Heart right ventricle (tissue), 16 donors: ENCODE measurements at regions of chr10 and their contacts with region 1.

Region 1: DNA sequence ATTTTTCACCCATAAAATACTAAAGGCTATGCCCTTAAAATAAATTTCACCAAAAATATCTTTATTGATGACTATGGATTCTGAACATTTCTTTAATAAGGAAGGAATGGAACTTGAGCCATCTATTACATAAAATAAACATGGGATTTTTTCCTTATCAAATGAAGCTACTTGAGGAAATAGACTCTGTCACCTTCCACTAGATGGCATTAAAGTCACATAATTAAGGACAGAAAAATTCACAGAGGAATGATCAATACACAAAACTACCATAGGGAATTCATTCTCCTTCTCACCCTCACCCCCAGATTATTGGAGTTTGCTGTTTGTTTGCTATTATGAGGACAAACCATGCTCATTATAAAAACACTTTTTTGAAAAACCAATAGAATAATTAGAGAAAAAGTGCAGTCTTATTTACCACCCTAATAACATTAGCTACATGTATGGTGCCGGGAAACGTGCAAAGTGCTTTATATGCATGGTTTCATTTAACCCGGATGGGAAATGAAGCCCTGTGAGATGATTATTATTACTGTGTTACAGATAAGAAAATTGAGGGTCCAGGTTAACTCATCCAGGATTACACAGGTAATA is 21.1 kb upstream of the FOXI2 start:
- DNase-seq: no peak
- ATAC-seq: no peak
- H3K4me3 ChIP-seq: no peak overlapping the region
- H3K27ac ChIP-seq: no peak overlapping the region
- H3K4me1 ChIP-seq: no peaks in the 10 kb centered on the region
- H3K27me3 ChIP-seq: peaks cover 0 to 14% (median 0%) of the 10 kb centered on the region in 7 donors
- CTCF ChIP-seq: peak in 8 of 9 donors; percentile 12 to 73 (median 51)

Region 2: DNA sequence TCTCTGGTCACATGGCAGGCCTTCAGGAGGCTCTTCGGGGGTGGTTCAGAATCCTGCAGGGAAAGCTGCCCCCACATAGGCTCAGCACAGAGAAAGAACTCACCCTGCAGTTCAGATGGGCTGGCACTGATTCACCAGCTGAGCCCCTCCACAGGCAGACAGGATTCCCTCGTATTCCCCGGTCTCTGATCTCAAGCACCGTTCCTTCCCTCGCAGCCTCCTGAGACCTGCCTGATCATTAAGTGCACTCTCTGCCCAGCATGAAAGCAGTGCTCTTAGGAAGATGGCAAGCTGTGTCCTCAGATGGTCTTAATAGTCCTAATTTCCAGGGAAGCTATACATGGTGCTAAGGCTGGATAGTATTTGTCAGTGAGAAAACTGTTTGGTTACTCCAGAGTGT is 245.0 kb before region 1 on chr10:
- intact Hi-C with region 1: no loop called
- DNase-seq: no peak
- ATAC-seq: no peak
- H3K4me3 ChIP-seq: no peak overlapping the region
- H3K27ac ChIP-seq: no peak overlapping the region
- H3K4me1 ChIP-seq: no peaks in the 10 kb centered on the region
- H3K27me3 ChIP-seq: peaks cover 0 to 15% (median 0%) of the 10 kb centered on the region in 7 donors
- CTCF ChIP-seq: no peak

Region 3: DNA sequence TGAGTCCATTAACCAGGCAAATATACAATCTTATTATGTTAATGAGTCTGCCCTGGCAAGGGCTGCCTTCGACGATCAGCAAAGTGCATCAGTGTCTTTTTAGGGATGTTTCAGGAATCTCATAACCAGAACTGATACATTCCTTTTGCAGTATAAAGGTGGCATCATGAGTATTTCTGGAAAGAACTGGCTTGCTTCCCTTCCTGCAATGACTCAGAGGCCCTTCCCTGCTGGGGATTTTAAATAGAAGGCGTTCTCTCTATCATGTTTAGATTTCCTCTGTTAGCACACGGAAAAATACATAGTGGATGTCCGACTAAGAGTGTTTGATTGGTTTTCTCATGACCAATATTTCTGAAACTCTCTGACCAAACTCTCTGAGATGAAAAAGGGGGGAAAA is 165.0 kb before region 1 on chr10:
- intact Hi-C with region 1: no loop called
- DNase-seq: no peak
- ATAC-seq: no peak
- H3K4me3 ChIP-seq: no peak overlapping the region
- H3K27ac ChIP-seq: no peak overlapping the region
- H3K4me1 ChIP-seq: no peaks in the 10 kb centered on the region
- H3K27me3 ChIP-seq: peaks cover 0 to 9% (median 0%) of the 10 kb centered on the region in 7 donors
- CTCF ChIP-seq: no peak

Region 4: DNA sequence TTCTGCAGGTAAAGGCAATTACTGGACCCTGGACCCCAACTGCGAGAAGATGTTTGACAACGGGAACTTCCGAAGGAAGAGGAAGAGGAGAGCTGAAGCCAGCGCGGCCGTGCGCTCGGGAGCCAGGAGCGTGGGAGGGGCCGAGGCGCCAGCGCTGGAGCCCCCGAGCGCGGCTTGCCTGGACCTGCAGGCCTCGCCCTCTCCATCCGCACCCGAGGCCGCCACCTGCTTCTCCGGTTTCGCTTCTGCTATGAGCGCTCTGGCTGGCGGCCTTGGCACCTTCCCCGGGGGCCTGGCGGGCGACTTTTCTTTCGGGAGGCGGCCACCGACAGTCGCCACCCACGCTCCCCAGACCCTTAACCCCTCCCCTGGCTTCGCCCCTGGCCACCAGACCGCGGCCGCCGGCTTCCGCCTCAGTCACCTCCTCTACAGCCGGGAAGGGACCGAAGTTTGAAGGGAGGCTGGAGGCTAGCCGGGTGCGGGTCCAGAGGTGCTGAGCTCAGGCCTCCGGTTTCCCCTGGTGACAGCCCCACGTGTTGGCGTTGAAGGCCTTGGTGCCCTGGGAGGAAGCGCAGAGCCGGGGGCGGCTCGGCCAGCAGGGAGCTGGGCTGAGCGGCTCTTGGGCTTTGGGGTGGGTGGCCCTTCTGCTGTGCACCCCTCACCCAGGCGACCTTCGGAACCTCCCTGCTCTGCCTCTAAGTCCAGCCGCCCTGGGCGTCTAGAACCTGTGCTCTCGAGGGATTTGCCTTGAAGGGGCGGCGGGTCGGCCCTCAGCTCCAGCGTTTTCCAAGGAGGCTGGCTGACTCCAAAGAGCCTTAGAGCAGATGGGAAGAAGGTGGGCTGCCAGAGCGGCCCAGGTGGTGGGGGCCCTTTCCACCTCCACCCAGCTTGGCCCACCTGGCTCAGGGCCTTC is 22.9 kb after region 1 on chr10:
- intact Hi-C with region 1: no loop called
- DNase-seq: no peak
- ATAC-seq: no peak
- H3K4me3 ChIP-seq: peak overlapping the region in 4 of 10 donors; percentile 4 to 56 (median 32)
- H3K27ac ChIP-seq: no peak overlapping the region
- H3K4me1 ChIP-seq: peaks cover 2 to 30% (median 11%) of the 10 kb centered on the region in 9 donors
- H3K27me3 ChIP-seq: peaks cover 22 to 70% (median 57%) of the 10 kb centered on the region in 7 donors
- CTCF ChIP-seq: no peak

Region 5: GRCh38 chr10:127813290-127813689 is 97.4 kb after region 1 on chr10:
- intact Hi-C with region 1: loop called in 1 of 10 experiments (anchors 5 kb)
- DNase-seq: no peak
- ATAC-seq: no peak
- H3K4me3 ChIP-seq: no peak overlapping the region
- H3K27ac ChIP-seq: no peak overlapping the region
- H3K4me1 ChIP-seq: no peaks in the 10 kb centered on the region
- H3K27me3 ChIP-seq: peaks cover 0 to 14% (median 0%) of the 10 kb centered on the region in 7 donors
- CTCF ChIP-seq: peak in 6 of 9 donors; percentile 14 to 54 (median 28)

Region 6: GRCh38 chr10:127853868-127854768 is 138.2 kb after region 1 on chr10:
- intact Hi-C with region 1: loop called (anchors 1 to 5 kb)
- DNase-seq: peak; percentile 48 to 69
- ATAC-seq: peak; percentile 78 to 94 (median 90)
- H3K4me3 ChIP-seq: no peak overlapping the region
- H3K27ac ChIP-seq: no peak overlapping the region
- H3K4me1 ChIP-seq: peaks cover 0 to 8% (median 4%) of the 10 kb centered on the region in 9 donors
- H3K27me3 ChIP-seq: peaks cover 0 to 24% (median 8%) of the 10 kb centered on the region in 7 donors
- CTCF ChIP-seq: peak; percentile 78 to 90 (median 81)

Region 7: GRCh38 chr10:128000471-128001362 is 284.8 kb after region 1 on chr10:
- intact Hi-C with region 1: loop called in 1 of 10 experiments (anchors 10 kb)
- DNase-seq: peak; percentile 39 to 47
- ATAC-seq: peak; percentile 53 to 89 (median 78)
- H3K4me3 ChIP-seq: no peak overlapping the region
- H3K27ac ChIP-seq: peak overlapping the region in 8 of 10 donors; percentile 20 to 85 (median 62)
- H3K4me1 ChIP-seq: peaks cover 12 to 70% (median 59%) of the 10 kb centered on the region in 9 donors
- H3K27me3 ChIP-seq: no peaks in the 10 kb centered on the region
- CTCF ChIP-seq: no peak

Region 8: DNA sequence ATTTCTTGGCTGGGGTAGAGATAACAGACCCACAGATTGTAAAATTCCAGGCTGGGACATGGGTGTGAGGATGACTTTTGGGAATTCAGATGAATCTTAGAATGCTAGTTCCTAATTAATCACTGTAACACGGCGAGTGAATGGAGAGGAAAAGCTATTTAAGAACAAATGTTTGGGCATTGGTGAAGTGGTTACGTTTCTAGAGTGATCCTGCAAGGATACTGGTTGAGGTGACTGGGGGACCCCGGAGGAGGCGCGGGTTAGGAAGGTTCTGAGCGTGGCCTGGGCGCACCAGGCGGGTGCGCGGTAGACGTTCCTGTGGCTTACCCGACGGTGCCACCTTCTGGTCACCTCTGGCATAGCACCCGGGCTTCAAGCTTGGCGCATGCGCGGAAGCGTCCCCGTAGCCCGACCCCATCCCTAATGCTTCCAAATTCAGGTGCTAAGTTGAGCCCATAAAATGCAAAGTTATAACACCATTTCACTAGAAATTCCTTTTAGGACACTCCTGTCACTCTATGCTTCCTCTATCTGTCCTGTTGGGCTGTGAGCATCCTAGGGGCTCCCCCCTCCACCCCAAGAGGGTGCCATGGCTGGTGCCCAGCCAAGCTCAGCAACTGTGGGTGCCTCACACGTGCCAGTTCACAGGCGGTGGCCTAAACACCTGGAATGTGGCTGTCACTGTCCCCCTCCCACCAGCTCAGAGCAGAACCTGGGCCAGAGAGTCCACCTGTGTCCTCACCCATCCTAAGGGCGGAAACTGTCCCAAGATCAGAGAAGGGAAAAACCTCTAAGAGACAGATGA is 295.5 kb after region 1 on chr10:
- intact Hi-C with region 1: loop called in 2 of 10 experiments (anchors 5 to 10 kb)
- DNase-seq: peak; percentile 80 to 89
- ATAC-seq: peak; percentile 85 to 91 (median 88)
- H3K4me3 ChIP-seq: no peak overlapping the region
- H3K27ac ChIP-seq: no peak overlapping the region
- H3K4me1 ChIP-seq: peaks cover 0 to 36% (median 22%) of the 10 kb centered on the region in 9 donors
- H3K27me3 ChIP-seq: no peaks in the 10 kb centered on the region
- CTCF ChIP-seq: peak; percentile 99 to 100 (median 99)

Region 9: DNA sequence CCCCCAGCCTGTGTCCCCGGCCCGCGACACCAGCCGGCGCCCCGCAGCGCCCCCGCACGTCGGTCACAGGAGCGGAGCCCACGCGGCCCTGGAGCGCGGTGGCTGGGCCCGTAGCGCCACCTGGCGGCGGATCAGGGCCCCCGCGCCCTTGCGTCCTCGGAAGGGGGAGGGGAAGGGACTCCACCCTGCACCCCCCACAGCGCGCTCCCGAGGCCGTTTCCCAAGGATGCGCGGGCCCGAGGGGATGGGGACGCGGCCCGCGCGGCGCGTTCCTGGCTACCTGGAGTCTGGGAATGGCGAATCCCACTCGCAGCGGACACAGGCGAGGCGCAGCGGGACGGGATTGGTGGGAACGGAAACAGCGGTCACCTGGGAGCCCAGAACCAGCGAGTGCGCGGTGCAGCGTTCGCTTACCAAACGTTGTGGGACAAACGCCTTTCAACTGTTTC is 434.2 kb after region 1 on chr10:
- intact Hi-C with region 1: loop called in 1 of 10 experiments (anchors 10 kb)
- DNase-seq: peak; percentile 40 to 59
- ATAC-seq: peak; percentile 90 to 97 (median 96)
- H3K4me3 ChIP-seq: peak overlapping the region; percentile 21 to 63 (median 44)
- H3K27ac ChIP-seq: peak overlapping the region in 1 of 10 donors; percentile 31
- H3K4me1 ChIP-seq: peaks cover 0 to 11% (median 5%) of the 10 kb centered on the region in 9 donors
- H3K27me3 ChIP-seq: peaks cover 0 to 54% (median 36%) of the 10 kb centered on the region in 7 donors
- CTCF ChIP-seq: peak; percentile 54 to 87 (median 78)

Region 10: DNA sequence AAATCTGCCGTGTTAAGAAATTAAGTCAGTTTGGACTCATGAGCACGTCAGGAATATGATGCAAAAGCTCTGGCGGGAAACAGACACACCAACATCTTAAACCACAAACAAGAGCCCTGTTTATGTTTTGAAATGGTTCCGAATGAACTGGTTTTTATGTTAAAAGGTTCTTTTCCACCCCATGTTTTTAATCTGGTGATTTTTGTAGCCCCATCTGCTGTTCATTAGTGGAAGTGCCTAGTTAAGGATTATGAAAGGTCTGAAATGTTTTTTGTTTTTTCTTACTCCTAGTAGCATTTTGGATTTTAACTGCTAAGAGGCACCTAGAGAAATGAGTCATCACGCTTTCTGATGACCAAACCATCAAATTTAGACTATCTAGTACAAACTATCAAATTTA is 814.4 kb after region 1 on chr10:
- intact Hi-C with region 1: loop called in 1 of 10 experiments (anchors 10 kb)
- DNase-seq: no peak
- ATAC-seq: no peak
- H3K4me3 ChIP-seq: no peak overlapping the region
- H3K27ac ChIP-seq: no peak overlapping the region
- H3K4me1 ChIP-seq: no peaks in the 10 kb centered on the region
- H3K27me3 ChIP-seq: peaks cover 0 to 58% (median 33%) of the 10 kb centered on the region in 7 donors
- CTCF ChIP-seq: peak; percentile 34 to 68 (median 57)